ENCODE measurements at regions of chr11 and their contacts with region 1.

Region 1: GRCh38 chr11:22331771-22332170 is 6.4 kb upstream of the SLC17A6 start:
- DNase-seq: no peak
- ATAC-seq: no peak
- H3K4me3 ChIP-seq: no peak overlapping the region
- H3K27ac ChIP-seq: no peak overlapping the region
- H3K4me1 ChIP-seq: no peaks in the 10 kb centered on the region
- H3K27me3 ChIP-seq: no peaks in the 10 kb centered on the region
- CTCF ChIP-seq: no peak

Region 2: DNA sequence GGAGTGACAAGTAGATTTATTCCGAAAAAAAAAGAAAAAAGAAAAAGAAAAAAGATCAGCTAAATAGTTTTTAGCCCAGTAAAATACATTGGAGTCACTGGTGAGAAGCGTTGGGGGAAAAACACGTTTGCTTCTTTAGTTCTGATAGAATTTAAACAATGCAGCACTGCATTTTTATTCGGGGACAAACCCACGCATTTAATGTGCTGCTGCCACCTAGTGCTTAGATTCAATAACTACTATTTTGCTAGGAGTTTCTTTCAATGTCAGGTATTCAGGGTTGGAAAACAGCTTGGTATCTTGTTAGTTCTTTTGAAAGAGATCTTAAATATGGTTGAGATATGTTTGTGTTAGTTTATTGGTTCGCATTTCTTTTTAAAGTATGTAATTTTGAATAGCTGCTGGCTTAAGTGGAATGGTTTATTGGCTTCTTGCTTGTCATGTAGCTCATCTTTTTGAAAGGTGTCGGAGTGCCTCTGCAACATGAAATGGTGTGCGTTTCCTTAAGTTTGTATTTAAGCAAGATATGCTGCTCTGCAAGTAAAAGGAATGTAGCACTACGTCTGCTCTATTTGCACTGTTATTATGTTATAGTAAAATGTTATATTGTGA is 455.9 kb after region 1 on chr11:
- intact Hi-C with region 1: loop called (anchors 5 kb)
- DNase-seq: no peak
- ATAC-seq: peak in 1 of 2 donors; percentile 56
- H3K4me3 ChIP-seq: no peak overlapping the region
- H3K27ac ChIP-seq: no peak overlapping the region
- H3K4me1 ChIP-seq: no peaks in the 10 kb centered on the region
- H3K27me3 ChIP-seq: no peaks in the 10 kb centered on the region
- CTCF ChIP-seq: peak; percentile 70